ENCODE measurements at regions of chr2 and their contacts with region 1.

Region 1: GRCh38 chr2:231925303-231926179 is 655 bp downstream of the NPPC start:
- DNase-seq: peak; percentile 90
- ATAC-seq: peak; percentile 94
- H3K4me3 ChIP-seq: peak overlapping the region; percentile 41
- H3K27ac ChIP-seq: no peak overlapping the region
- H3K4me1 ChIP-seq: peaks cover 22% of the 10 kb centered on the region
- H3K27me3 ChIP-seq: peaks cover 74% of the 10 kb centered on the region
- CTCF ChIP-seq: peak; percentile 91

Region 2: GRCh38 chr2:232438951-232439757 is 513.6 kb after region 1 on chr2:
- intact Hi-C with region 1: loop called (anchors 10 kb)
- DNase-seq: peak; percentile 66
- ATAC-seq: peak; percentile 70
- H3K4me3 ChIP-seq: no peak overlapping the region
- H3K27ac ChIP-seq: no peak overlapping the region
- H3K4me1 ChIP-seq: no peaks in the 10 kb centered on the region
- H3K27me3 ChIP-seq: no peaks in the 10 kb centered on the region
- CTCF ChIP-seq: peak; percentile 57

Measured in upper lobe of right lung (tissue), 1 donor.